ENCODE measurements at regions of chr1 and their contacts with region 1.

Region 1: GRCh38 chr1:156767101-156767878 is at the start of gene PRCC:
- DNase-seq: peak; percentile 100
- H3K4me3 ChIP-seq: peak within 1 kb of the TSS; percentile 65 to 91 (median 74)
- H3K27ac ChIP-seq: peak within 1 kb of the TSS; percentile 80
- H3K4me1 ChIP-seq: peaks cover 18% of the 10 kb centered on the region
- H3K27me3 ChIP-seq: no peaks in the 10 kb centered on the region
- CTCF ChIP-seq: no peak
- POLR2A ChIP-seq: no peak
- total RNA-seq, gene PRCC: 65.1 and 71.5 TPM in 2 replicates

Region 2: GRCh38 chr1:156740679-156741612 is 26.3 kb before region 1 on chr1 and contains the start of gene MRPL24:
- CTCF ChIA-PET with region 1: interaction called, 20 read pairs
- POLR2A ChIA-PET with region 1: interaction called, 14 read pairs
- dilution Hi-C with region 1: no loop called
- intact Hi-C with region 1: loop called (anchors 1 kb)
- DNase-seq: peak; percentile 99
- H3K4me3 ChIP-seq: peak within 1 kb of the TSS; percentile 59 to 67 (median 61)
- H3K27ac ChIP-seq: peak within 1 kb of the TSS; percentile 22
- H3K4me1 ChIP-seq: peaks cover 14% of the 10 kb centered on the region
- H3K27me3 ChIP-seq: no peaks in the 10 kb centered on the region
- CTCF ChIP-seq: no peak
- POLR2A ChIP-seq: peak; percentile 69
- total RNA-seq, gene MRPL24: 63.3 and 77.7 TPM in 2 replicates

Region 3: GRCh38 chr1:156751758-156752757 is 15.2 kb before region 1 on chr1:
- CTCF ChIA-PET with region 1: interaction called, 22 read pairs
- POLR2A ChIA-PET with region 1: interaction called, 27 read pairs
- dilution Hi-C with region 1: no loop called
- intact Hi-C with region 1: loop called (anchors 1 kb)
- DNase-seq: peak; percentile 97
- H3K4me3 ChIP-seq: peak overlapping the region; percentile 30 to 94 (median 73)
- H3K27ac ChIP-seq: peak overlapping the region; percentile 60
- H3K4me1 ChIP-seq: peaks cover 42% of the 10 kb centered on the region
- H3K27me3 ChIP-seq: no peaks in the 10 kb centered on the region
- CTCF ChIP-seq: peak in 1 of 2 donors; percentile 29
- POLR2A ChIP-seq: peak; percentile 72

Measured in endothelial cell of umbilical vein (primary cell).